HCT116 (cell line): ENCODE measurements at regions of chr9 and their contacts with region 1.

Region 1: GRCh38 chr9:121545875-121546423 is 46.3 kb upstream of the GGTA1 start:
- DNase-seq: peak; percentile 93
- ATAC-seq: peak; percentile 94
- H3K4me3 ChIP-seq: peak overlapping the region; percentile 29 to 44
- H3K27ac ChIP-seq: peak overlapping the region; percentile 6; the same call in 1 of the 2 replicates
- H3K4me1 ChIP-seq: peaks cover 7 to 28% of the 10 kb centered on the region in 2 experiments; a peak in 3 of 4 replicates
- H3K27me3 ChIP-seq: no peaks in the 10 kb centered on the region
- CTCF ChIP-seq: peak; percentile 94 to 96 (median 95)
- POLR2A ChIP-seq: no peak
- RAD21 ChIP-seq: peak; percentile 98

Region 2: GRCh38 chr9:121573717-121574485 is 28.0 kb after region 1 on chr9:
- CTCF ChIA-PET with region 1: interaction called, 15 read pairs
- POLR2A ChIA-PET with region 1: interaction called, 4 read pairs
- RAD21 ChIA-PET with region 1: interaction called in 1 of 2 experiments, 5 read pairs
- intact Hi-C with region 1: no loop called
- DNase-seq: no peak
- ATAC-seq: peak; percentile 25; the same call in 1 of the 2 replicates
- H3K4me3 ChIP-seq: no peak overlapping the region
- H3K27ac ChIP-seq: no peak overlapping the region
- H3K4me1 ChIP-seq: peaks cover 0 to 5% of the 10 kb centered on the region in 2 experiments; a peak in 1 of 4 replicates
- H3K27me3 ChIP-seq: no peaks in the 10 kb centered on the region
- CTCF ChIP-seq: peak in 1 of 3 experiments; percentile 55; a peak in 1 of 6 replicates
- POLR2A ChIP-seq: no peak
- RAD21 ChIP-seq: peak; percentile 66

Region 3: GRCh38 chr9:121686930-121687541 is 141.1 kb after region 1 on chr9:
- CTCF ChIA-PET with region 1: interaction called, 15 read pairs
- POLR2A ChIA-PET with region 1: no interaction called
- RAD21 ChIA-PET with region 1: interaction called in 1 of 2 experiments, 5 read pairs
- intact Hi-C with region 1: loop called (anchors 2 kb)
- DNase-seq: peak; percentile 43
- ATAC-seq: peak; percentile 90
- H3K4me3 ChIP-seq: no peak overlapping the region
- H3K27ac ChIP-seq: no peak overlapping the region
- H3K4me1 ChIP-seq: peaks cover 0 to 23% of the 10 kb centered on the region in 2 experiments; a peak in 3 of 4 replicates
- H3K27me3 ChIP-seq: no peaks in the 10 kb centered on the region
- CTCF ChIP-seq: peak; percentile 86 to 97 (median 93)
- POLR2A ChIP-seq: no peak
- RAD21 ChIP-seq: peak; percentile 94

Region 4: GRCh38 chr9:121698627-121699570 is 152.9 kb after region 1 on chr9:
- CTCF ChIA-PET with region 1: interaction called, 16 read pairs
- POLR2A ChIA-PET with region 1: no interaction called
- RAD21 ChIA-PET with region 1: interaction called, 3 read pairs
- intact Hi-C with region 1: no loop called
- DNase-seq: no peak
- ATAC-seq: peak; percentile 74
- H3K4me3 ChIP-seq: peak overlapping the region; percentile 70 to 73
- H3K27ac ChIP-seq: peak overlapping the region; percentile 64; the same call in 1 of the 2 replicates
- H3K4me1 ChIP-seq: peaks cover 2 to 17% of the 10 kb centered on the region in 2 experiments; a peak in 3 of 4 replicates
- H3K27me3 ChIP-seq: no peaks in the 10 kb centered on the region
- CTCF ChIP-seq: no peak
- POLR2A ChIP-seq: no peak
- RAD21 ChIP-seq: no peak

Region 5: GRCh38 chr9:121992571-121993212 is 446.7 kb after region 1 on chr9:
- CTCF ChIA-PET with region 1: interaction called, 13 read pairs
- POLR2A ChIA-PET with region 1: no interaction called
- RAD21 ChIA-PET with region 1: no interaction called
- intact Hi-C with region 1: loop called (anchors 1 kb)
- DNase-seq: peak; percentile 69
- ATAC-seq: peak; percentile 90
- H3K4me3 ChIP-seq: no peak overlapping the region
- H3K27ac ChIP-seq: no peak overlapping the region
- H3K4me1 ChIP-seq: no peaks in the 10 kb centered on the region
- H3K27me3 ChIP-seq: no peaks in the 10 kb centered on the region
- CTCF ChIP-seq: peak; percentile 66 to 90 (median 90)
- POLR2A ChIP-seq: no peak
- RAD21 ChIP-seq: peak; percentile 93

Region 6: GRCh38 chr9:122099271-122099869 is 553.4 kb after region 1 on chr9:
- CTCF ChIA-PET with region 1: interaction called, 10 read pairs
- POLR2A ChIA-PET with region 1: no interaction called
- RAD21 ChIA-PET with region 1: interaction called in 1 of 2 experiments, 3 read pairs
- intact Hi-C with region 1: loop called (anchors 10 kb)
- DNase-seq: peak; percentile 53
- ATAC-seq: peak; percentile 88
- H3K4me3 ChIP-seq: no peak overlapping the region
- H3K27ac ChIP-seq: no peak overlapping the region
- H3K4me1 ChIP-seq: no peaks in the 10 kb centered on the region; a peak in 1 of 4 replicates
- H3K27me3 ChIP-seq: no peaks in the 10 kb centered on the region
- CTCF ChIP-seq: peak; percentile 78 to 97 (median 80)
- POLR2A ChIP-seq: no peak
- RAD21 ChIP-seq: peak; percentile 86